ENCODE measurements at regions of chr1 and their contacts with region 1.

Region 1: DNA sequence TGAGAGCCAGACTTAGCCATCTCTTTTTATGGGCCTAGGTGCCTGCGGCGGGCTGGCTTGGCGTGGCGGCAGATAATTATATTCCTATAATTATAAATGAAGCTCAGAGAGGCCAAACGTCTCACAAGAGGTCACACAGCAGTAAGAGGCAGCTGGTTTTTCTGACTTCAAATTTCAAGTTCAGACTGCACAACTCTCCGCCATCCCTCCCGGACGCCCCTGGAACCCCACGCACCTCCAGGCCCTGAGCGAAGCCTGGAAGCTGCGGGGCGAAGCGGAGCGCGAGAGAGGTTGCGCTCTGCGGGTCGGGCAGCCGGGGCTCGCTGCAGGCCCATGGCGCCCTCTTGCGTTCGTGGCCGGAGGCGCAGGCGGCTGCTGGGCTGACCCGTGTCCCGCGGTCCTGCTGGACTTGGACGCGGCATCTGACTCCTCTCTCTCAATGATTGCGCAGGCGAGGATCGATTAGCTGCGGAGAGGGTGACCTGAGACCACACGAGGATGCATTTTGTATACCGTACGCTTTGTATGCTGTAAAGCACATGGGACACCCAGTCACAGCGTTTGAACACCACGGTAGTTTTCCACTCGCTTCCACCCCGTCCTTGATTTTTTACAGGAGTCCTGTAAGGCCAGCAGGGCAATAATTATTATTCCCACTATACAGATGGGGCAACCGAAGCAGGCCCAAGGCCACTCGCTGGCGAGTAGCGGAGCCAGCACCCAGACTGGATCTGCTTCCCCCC is 272.7 kb downstream of the FOXD2 start:
- DNase-seq: peak; percentile 26 to 76 (median 56)
- ATAC-seq: peak; percentile 65
- H3K4me3 ChIP-seq: no peak overlapping the region
- H3K4me3 Mint-ChIP-seq: no peak overlapping the region
- H3K27ac ChIP-seq: no peak overlapping the region
- H3K27ac Mint-ChIP-seq: no peak overlapping the region
- H3K4me1 ChIP-seq: peaks cover 25% of the 10 kb centered on the region
- H3K4me1 Mint-ChIP-seq: peaks cover 8% of the 10 kb centered on the region
- H3K27me3 ChIP-seq: peaks cover 65 to 85% of the 10 kb centered on the region in 2 experiments
- H3K27me3 Mint-ChIP-seq: peaks cover 89% of the 10 kb centered on the region
- CTCF ChIP-seq: peak; percentile 90

Region 2: DNA sequence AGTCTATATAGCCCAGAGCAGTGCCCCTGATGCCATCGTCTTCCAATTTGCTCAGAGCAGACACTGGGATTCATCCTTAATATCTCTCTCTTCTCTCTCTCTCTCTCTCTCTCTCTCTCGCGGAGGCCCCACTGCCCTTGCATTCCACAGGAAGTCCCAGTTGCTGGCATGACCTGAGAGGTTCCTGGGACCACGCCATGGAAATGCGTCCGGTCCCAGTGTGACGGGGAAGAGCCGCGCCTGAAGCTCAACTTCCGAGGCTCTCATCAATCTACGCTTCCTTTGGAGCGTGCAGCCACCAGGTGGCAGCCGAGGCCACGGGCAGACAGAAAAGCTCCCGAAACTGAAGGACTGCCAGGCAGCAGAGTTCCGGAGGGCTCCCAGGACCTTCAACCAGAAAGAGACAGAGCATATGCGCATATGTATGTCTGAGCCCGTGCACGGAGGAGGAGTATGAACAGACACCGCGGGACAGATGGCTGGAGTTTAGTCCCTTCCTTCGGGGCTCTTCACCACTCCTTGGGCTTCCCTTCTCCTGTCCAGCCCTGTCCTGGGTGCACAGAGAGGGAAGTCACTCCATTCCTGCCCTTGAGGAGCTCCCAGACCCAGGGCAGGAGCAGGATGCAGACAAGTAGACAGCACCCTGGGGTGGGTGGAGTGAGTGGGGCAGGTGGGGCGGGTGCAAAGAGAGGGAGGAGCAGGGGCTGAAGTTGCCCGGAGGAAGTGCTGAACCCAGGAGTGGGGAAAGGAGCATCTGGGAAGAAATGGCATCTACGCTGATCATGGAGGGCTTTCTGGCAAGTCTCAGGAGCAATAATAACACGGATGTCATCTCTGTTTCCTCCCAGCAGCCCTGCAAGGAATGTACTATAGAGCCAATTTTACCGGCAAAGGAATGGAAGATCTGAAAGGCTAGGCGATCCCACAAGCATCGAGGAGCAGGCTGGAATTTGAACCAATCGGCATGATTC is 531.2 kb before region 1 on chr1:
- CTCF ChIA-PET with region 1: no interaction called
- POLR2A ChIA-PET with region 1: no interaction called
- intact Hi-C with region 1: loop called in 1 of 2 experiments (anchors 5 kb)
- DNase-seq: peak; percentile 40 to 79 (median 58)
- ATAC-seq: peak; percentile 63
- H3K4me3 ChIP-seq: peak overlapping the region; percentile 47
- H3K4me3 Mint-ChIP-seq: peak overlapping the region; percentile 78
- H3K27ac ChIP-seq: no peak overlapping the region
- H3K27ac Mint-ChIP-seq: no peak overlapping the region
- H3K4me1 ChIP-seq: peaks cover 11% of the 10 kb centered on the region
- H3K4me1 Mint-ChIP-seq: peaks cover 15% of the 10 kb centered on the region
- H3K27me3 ChIP-seq: peaks cover 16 to 22% of the 10 kb centered on the region in 2 experiments
- H3K27me3 Mint-ChIP-seq: peaks cover 69% of the 10 kb centered on the region
- CTCF ChIP-seq: peak; percentile 73

Region 3: DNA sequence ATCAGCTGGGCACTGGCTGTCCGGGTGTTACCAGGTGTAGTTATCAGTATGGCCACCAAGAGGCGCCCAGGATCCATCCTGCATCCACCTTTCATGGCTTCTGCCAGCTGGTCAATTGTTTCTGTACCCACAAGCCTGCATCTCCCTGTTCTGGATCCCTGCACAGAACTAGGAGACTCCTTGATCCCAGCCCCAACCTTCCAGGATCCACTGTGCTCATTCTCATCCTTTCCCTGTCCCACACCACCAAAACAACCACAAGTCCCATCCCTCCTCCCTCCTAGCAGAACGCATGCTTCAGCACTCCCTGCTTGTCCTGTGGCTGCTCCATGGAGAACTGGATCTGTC is 321.6 kb before region 1 on chr1:
- CTCF ChIA-PET with region 1: interaction called, 3 read pairs
- POLR2A ChIA-PET with region 1: no interaction called
- intact Hi-C with region 1: loop called (anchors 2 kb)
- DNase-seq: peak in 12 of 14 experiments; percentile 7 to 51 (median 18)
- ATAC-seq: peak; percentile 32
- H3K4me3 ChIP-seq: no peak overlapping the region
- H3K4me3 Mint-ChIP-seq: no peak overlapping the region
- H3K27ac ChIP-seq: no peak overlapping the region
- H3K27ac Mint-ChIP-seq: no peak overlapping the region
- H3K4me1 ChIP-seq: no peaks in the 10 kb centered on the region
- H3K4me1 Mint-ChIP-seq: no peaks in the 10 kb centered on the region
- H3K27me3 ChIP-seq: peaks cover 0 to 3% of the 10 kb centered on the region in 2 experiments
- H3K27me3 Mint-ChIP-seq: peaks cover 15% of the 10 kb centered on the region
- CTCF ChIP-seq: peak; percentile 43

Region 4: DNA sequence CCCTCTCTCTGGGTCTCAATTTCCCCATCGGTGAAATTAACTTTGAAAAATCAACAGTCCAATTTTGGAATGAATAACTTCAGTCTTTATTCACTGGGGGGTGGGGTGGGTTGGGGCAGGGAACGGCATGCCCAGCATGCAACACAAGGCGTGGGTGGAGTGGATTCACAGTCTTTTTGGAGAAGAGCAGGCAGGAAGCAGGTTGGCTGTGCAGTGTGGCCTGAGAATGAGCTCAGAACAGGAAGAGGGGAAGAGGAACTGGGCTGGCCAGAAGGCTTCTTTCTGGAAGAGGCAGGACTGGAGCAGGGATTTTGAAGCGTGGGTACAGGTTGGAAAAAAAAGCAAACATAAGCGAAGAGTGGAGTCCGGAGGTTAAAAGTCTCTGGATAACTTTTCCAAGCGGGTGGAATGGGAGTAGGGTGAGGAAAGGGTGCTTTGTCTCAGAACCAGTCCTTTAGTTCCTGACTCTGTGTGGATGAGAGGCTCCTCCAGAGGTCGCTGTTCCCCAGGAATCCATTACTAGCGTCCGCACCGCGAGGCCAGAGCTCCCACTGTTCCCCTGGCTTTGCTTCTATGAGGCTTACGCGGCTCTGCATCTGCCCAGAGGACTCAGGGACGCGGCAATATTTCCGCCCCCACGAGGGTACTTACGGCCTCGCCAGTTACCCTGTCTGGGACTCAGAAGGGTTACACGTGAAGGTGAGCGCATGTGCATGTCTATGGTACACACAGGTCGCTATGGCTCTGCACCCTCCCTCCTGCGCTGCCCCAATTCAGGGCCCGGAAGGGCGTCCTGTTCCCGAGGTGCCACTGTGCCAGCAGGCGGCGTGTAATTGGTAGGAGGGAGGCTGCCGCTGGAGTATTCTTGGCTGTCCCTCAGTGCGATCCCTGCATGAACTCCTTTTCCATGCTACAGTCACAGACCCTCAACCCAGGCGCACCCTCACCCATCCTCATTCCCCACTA is 278.1 kb before region 1 on chr1:
- CTCF ChIA-PET with region 1: interaction called, 12 read pairs
- POLR2A ChIA-PET with region 1: interaction called, 4 read pairs
- intact Hi-C with region 1: loop called (anchors 1 kb)
- DNase-seq: peak in 13 of 14 experiments; percentile 42 to 81 (median 54)
- ATAC-seq: peak; percentile 51
- H3K4me3 ChIP-seq: peak overlapping the region; percentile 38
- H3K4me3 Mint-ChIP-seq: peak overlapping the region; percentile 84
- H3K27ac ChIP-seq: no peak overlapping the region
- H3K27ac Mint-ChIP-seq: no peak overlapping the region
- H3K4me1 ChIP-seq: peaks cover 45% of the 10 kb centered on the region
- H3K4me1 Mint-ChIP-seq: peaks cover 45% of the 10 kb centered on the region
- H3K27me3 ChIP-seq: peaks cover 24 to 34% of the 10 kb centered on the region in 2 experiments
- H3K27me3 Mint-ChIP-seq: peaks cover 75% of the 10 kb centered on the region
- CTCF ChIP-seq: peak; percentile 69

Measured in CD4-positive, alpha-beta T cell (primary cell).